Adrenal gland (tissue), 19 donors: ENCODE measurements at regions of chr19 and their contacts with region 1.

Region 1: DNA sequence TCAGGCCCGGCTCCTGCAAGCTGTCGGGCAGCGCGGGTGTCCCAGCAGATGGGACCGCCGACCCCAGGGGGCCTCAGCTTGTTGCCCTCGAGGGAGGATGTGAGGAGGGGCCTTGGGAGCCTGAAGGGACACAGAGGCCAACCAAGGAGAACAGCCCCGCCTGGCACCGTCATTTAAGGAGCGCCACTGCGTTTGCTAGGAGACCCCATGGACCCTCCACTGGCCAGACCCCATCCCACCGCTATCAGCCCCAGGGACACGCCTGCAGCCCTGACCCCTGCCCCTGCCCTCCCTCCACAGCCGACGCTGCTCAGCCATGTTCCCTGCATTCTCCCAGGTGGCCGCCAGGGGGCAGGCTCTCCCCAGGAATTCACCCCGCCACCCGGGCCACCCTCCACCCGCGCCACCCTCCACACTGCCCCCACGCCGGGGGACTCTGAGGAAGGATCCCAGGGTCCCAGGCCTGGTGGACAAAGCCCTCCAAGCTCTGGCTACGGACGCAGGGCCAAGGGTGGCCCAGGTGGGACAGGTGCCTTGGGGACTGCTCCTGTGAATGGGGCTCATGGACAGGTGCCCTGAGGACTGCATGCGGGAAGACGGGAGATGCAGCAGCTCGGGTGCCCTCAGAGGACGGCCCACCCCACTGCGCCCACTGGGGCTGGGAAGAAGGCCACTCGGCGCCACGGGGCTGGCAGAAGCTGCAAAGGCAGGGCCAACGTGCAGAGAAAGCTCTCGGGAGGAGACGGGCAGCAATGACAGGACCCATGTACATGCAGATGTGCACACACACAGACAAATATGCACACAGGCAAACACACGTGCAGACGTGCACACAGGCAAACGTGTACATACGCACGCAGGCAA is 34.4 kb downstream of the PIP5K1C start:
- DNase-seq: peak; percentile 38 to 80 (median 68)
- H3K4me3 ChIP-seq: no peak overlapping the region
- H3K27ac ChIP-seq: no peak overlapping the region
- H3K4me1 ChIP-seq: peaks cover 4 to 24% of the 10 kb centered on the region in 2 donors
- H3K27me3 ChIP-seq: no peaks in the 10 kb centered on the region
- CTCF ChIP-seq: peak; percentile 89 to 99 (median 94)
- POLR2A ChIP-seq: no peak

Region 2: DNA sequence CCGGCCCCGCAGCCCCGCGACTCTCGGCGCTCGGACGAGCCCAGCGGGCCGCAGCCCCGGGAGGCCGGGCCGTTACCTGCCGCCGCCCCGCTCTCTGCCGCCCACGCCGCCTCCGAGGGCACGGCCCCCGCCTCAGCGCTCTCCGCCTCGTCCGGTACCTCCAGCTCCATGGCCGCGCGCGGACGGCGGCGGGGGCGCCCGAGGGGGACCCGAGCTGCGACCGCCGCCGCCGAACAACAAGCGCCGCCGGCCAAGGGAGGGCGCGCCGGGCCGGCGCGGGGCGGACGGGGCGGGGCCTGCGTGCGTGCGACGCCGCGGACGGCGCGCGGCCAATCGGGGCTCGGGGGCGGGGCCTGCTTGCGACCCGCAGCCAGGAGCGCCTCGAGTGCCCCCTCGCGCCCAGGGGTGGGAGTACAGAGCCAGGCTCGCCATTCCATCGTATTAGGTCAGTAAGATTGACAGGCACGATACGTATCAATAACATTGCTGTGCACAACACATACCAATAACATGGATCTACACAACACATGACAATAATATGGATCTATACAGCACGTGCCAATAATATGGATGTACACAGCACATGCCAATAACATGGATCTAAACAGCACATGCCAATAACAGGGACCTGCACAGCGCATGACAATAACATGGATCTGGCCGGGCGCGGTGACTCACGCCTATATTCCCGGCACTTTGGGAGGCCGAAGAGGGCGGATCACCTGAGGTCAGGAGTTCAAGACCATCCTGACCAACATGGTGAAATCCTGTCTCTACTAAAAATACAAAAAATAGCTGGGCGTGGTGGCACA is 34.5 kb after region 1 on chr19 and contains the start of gene PIP5K1C:
- intact Hi-C with region 1: loop called (anchors 5 kb)
- DNase-seq: peak; percentile 85 to 94 (median 90)
- H3K4me3 ChIP-seq: peak within 1 kb of the TSS; percentile 41 to 91 (median 82)
- H3K27ac ChIP-seq: peak within 1 kb of the TSS in 4 of 5 donors; percentile 43 to 83 (median 63)
- H3K4me1 ChIP-seq: peaks cover 0 to 8% of the 10 kb centered on the region in 2 donors
- H3K27me3 ChIP-seq: peaks cover 3% of the 10 kb centered on the region
- CTCF ChIP-seq: peak; percentile 45 to 88 (median 72)
- POLR2A ChIP-seq: peak; percentile 33 to 55
- total RNA-seq, gene PIP5K1C: 4.0 to 44.7 (median 31.1) TPM

Region 3: GRCh38 chr19:3821857-3822364 is 156.0 kb after region 1 on chr19:
- intact Hi-C with region 1: loop called in 1 of 2 experiments (anchors 5 kb)
- DNase-seq: peak; percentile 27 to 77 (median 63)
- H3K4me3 ChIP-seq: no peak overlapping the region
- H3K27ac ChIP-seq: no peak overlapping the region
- H3K4me1 ChIP-seq: no peaks in the 10 kb centered on the region
- H3K27me3 ChIP-seq: no peaks in the 10 kb centered on the region
- CTCF ChIP-seq: peak; percentile 83 to 98 (median 96)
- POLR2A ChIP-seq: no peak